K562 (cell line): ENCODE measurements at regions of chr12 and their contacts with region 1.

Region 1: GRCh38 chr12:75892731-75893408 is 138.7 kb downstream of the PHLDA1 start:
- DNase-seq: peak; percentile 68 to 94 (median 80)
- ATAC-seq: peak; percentile 98
- H3K4me3 ChIP-seq: no peak overlapping the region
- H3K27ac ChIP-seq: no peak overlapping the region; the same call in 2 of the 3 replicates
- H3K4me1 ChIP-seq: peaks cover 0 to 22% of the 10 kb centered on the region in 2 experiments; a peak in 4 of 5 replicates
- H3K27me3 ChIP-seq: no peaks in the 10 kb centered on the region; a peak in 1 of 5 replicates
- CTCF ChIP-seq: peak in 1 of 3 experiments; percentile 10; a peak in 1 of 6 replicates
- EP300 ChIP-seq: peak; percentile 95
- POLR2A ChIP-seq: no peak
- RAD21 ChIP-seq: peak; percentile 26 to 46; a peak in 3 of 4 replicates

Region 2: GRCh38 chr12:75650595-75651341 is 242.1 kb before region 1 on chr12:
- CTCF ChIA-PET with region 1: no interaction called
- POLR2A ChIA-PET with region 1: no interaction called
- in situ Hi-C with region 1: no loop called
- intact Hi-C with region 1: no loop called
- DNase-seq: no peak
- ATAC-seq: no peak
- H3K4me3 ChIP-seq: no peak overlapping the region
- H3K27ac ChIP-seq: no peak overlapping the region
- H3K4me1 ChIP-seq: no peaks in the 10 kb centered on the region; a peak in 1 of 5 replicates
- H3K27me3 ChIP-seq: 0 out of 5 replicates have a peak, but pooled peaks cover 0 to 4% of the 10 kb centered on the region in 2 experiments
- CTCF ChIP-seq: no peak
- EP300 ChIP-seq: no peak
- POLR2A ChIP-seq: no peak
- RAD21 ChIP-seq: no peak

Region 3: DNA sequence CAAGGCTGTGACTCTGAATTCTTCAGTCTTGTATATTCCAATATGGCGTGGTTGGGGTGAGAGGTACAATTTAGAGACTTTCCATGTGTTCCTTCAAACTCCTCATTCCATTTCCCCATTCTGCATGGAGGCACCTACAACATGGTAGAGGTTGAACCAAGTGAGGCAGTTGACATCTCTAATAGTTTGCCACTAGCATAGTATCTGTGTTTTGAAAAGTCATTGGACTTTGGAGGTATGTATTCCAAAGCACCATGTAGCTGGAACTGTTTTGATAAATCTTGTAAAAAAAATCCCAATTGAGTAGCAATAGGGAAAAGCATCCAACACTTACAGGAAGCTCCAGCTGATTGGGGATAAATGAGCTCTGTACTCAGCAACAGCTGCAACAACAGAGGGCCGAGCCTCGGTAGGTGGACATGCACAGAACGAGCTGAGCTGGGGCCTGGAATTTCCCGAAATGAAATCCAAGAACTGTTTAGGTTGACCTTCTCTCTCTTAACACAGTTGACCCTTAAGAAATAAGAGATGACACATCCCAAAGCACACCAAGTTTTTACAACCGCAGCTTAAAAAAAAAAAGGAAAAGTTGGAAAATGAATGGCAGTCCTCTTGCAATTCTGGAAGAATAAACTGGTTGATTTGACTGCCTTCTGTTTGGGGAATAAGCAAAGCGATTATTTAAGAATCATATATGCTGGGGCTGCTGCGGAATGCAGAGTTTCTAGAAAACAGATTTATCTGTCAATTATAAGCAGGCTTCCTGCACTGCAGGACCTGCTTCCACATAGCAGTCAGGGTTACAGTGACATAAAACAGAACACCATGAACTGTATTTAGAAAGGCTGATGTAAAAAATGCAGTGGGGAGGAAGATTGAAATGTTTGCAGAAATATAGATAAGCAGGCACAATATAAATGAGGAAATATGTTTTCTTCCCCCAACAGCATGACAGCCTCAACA is 186.8 kb before region 1 on chr12:
- CTCF ChIA-PET with region 1: no interaction called
- POLR2A ChIA-PET with region 1: no interaction called
- in situ Hi-C with region 1: no loop called
- intact Hi-C with region 1: loop called (anchors 10 kb)
- DNase-seq: peak; percentile 32 to 54 (median 38)
- ATAC-seq: peak; percentile 72
- H3K4me3 ChIP-seq: no peak overlapping the region
- H3K27ac ChIP-seq: peak overlapping the region; percentile 65
- H3K4me1 ChIP-seq: peaks cover 3 to 35% of the 10 kb centered on the region in 2 experiments; a peak in 4 of 5 replicates
- H3K27me3 ChIP-seq: no peaks in the 10 kb centered on the region
- CTCF ChIP-seq: no peak
- EP300 ChIP-seq: no peak; the same call in 1 of the 2 replicates
- POLR2A ChIP-seq: no peak
- RAD21 ChIP-seq: no peak

Region 4: DNA sequence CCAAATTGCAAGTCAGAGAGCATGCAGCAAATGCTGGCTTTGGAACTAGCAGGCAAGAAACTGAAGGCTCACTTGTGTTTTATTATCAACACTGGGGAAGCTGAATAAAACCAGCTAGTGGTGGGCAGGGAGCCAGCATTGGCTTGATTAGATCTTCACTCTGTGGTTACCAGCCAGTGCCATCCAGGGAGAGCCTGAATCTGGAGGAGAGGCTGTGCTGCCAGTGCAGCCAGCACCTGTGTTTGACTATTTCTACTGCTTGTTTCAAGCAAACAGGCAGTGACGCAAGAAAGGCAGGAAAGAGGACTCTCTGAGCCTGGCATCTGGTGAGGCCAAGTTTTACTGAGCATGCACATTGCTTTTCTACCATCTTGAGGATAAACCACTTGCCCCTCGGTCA is 108.3 kb before region 1 on chr12:
- CTCF ChIA-PET with region 1: no interaction called
- POLR2A ChIA-PET with region 1: no interaction called
- in situ Hi-C with region 1: no loop called
- intact Hi-C with region 1: loop called (anchors 5 kb)
- DNase-seq: no peak
- ATAC-seq: no peak
- H3K4me3 ChIP-seq: no peak overlapping the region
- H3K27ac ChIP-seq: no peak overlapping the region
- H3K4me1 ChIP-seq: peaks cover 0 to 20% of the 10 kb centered on the region in 2 experiments; a peak in 3 of 5 replicates
- H3K27me3 ChIP-seq: no peaks in the 10 kb centered on the region
- CTCF ChIP-seq: no peak
- EP300 ChIP-seq: no peak
- POLR2A ChIP-seq: no peak
- RAD21 ChIP-seq: no peak

Region 5: DNA sequence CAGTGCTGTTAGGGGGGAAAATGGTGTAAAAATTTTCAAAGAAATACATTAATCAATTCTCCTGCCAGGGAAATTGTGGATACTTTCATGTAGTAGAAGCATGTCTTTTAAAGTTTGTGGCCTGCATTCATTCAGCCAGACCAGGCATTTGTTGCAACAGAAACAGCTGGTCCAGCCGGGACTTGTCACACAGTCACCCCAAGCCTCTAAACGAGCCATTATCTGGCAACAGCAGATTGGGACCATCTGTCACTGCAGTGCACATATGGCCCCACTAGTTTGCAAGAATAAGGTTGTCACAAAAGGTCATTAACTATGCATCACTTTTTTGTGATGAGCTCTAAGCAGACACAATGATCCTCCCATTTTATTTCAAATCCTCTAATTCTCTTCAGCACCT is 55.2 kb before region 1 on chr12:
- CTCF ChIA-PET with region 1: no interaction called
- POLR2A ChIA-PET with region 1: no interaction called
- in situ Hi-C with region 1: no loop called
- intact Hi-C with region 1: no loop called
- DNase-seq: peak; percentile 23 to 60 (median 51)
- ATAC-seq: peak; percentile 70
- H3K4me3 ChIP-seq: no peak overlapping the region
- H3K27ac ChIP-seq: no peak overlapping the region
- H3K4me1 ChIP-seq: no peaks in the 10 kb centered on the region; a peak in 1 of 5 replicates
- H3K27me3 ChIP-seq: no peaks in the 10 kb centered on the region
- CTCF ChIP-seq: no peak
- EP300 ChIP-seq: peak; percentile 28; the same call in 1 of the 2 replicates
- POLR2A ChIP-seq: no peak
- RAD21 ChIP-seq: peak in 1 of 2 experiments; percentile 12; a peak in 1 of 4 replicates

Region 6: GRCh38 chr12:75933101-75933500 is 40.2 kb after region 1 on chr12:
- CTCF ChIA-PET with region 1: no interaction called
- POLR2A ChIA-PET with region 1: no interaction called
- in situ Hi-C with region 1: no loop called
- intact Hi-C with region 1: loop called (anchors 1 kb)
- DNase-seq: no peak
- ATAC-seq: no peak
- H3K4me3 ChIP-seq: no peak overlapping the region
- H3K27ac ChIP-seq: no peak overlapping the region
- H3K4me1 ChIP-seq: peaks cover 8 to 40% of the 10 kb centered on the region in 2 experiments; a peak in 4 of 5 replicates
- H3K27me3 ChIP-seq: no peaks in the 10 kb centered on the region
- CTCF ChIP-seq: no peak
- EP300 ChIP-seq: no peak
- POLR2A ChIP-seq: no peak
- RAD21 ChIP-seq: no peak